ENCODE measurements at regions of chr17 and their contacts with region 1.

Region 1: DNA sequence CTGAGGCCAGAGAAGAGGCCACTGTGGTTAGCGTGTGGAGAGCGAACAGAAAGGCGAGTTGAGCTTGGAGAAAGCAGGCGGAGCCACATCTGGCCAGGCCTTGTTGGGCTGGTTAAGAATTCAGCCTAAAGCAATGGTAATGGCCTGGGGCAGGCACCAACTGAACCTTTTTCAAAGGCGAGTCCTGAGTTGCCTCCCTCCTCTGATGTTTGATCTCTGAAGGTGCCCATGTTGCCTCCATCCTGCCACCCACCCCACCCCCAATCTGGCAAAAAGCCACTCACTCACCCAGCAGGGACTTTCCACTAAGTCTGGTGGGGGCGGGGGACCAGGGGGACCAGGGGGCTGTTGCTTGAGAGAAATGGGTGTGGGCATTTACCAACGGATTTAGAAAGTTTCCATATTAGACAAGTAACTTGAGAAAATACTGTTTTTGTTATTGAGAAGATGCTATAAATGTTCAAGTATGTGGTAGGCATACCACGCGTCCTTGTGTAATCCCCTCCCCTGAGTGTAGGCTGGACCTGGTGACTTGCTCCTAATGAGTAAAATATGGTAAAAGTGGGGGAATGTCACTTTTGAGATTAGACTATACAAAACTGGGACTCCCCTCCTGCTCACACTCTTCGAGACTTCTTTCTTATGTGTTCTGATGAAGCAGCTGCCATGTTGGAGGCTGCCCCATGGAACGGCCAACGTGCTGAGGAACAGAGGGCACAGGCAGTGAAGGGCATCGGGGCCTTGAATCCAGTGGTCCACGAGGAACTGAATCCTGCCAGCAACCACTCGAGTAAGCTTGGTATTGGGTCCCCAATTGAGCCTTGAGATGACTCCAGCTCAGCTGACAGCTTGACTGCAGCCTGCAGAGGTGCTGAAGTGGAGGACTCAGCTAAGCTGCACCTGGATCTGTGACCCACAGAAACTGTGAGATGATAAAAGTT is 29.9 kb upstream of the TNS4 start:
- DNase-seq: no peak
- ATAC-seq: no peak
- H3K4me3 ChIP-seq: no peak overlapping the region
- H3K27ac ChIP-seq: peak overlapping the region in 6 of 10 donors; percentile 71 to 85 (median 74)
- H3K4me1 ChIP-seq: peaks cover 10 to 52% (median 35%) of the 10 kb centered on the region in 9 donors
- H3K27me3 ChIP-seq: peaks cover 0 to 4% (median 0%) of the 10 kb centered on the region in 7 donors
- CTCF ChIP-seq: no peak

Region 2: GRCh38 chr17:40303009-40303657 is 228.2 kb before region 1 on chr17:
- intact Hi-C with region 1: loop called in 6 of 10 experiments (anchors 5 to 10 kb)
- DNase-seq: peak in 1 of 2 donors; percentile 71
- ATAC-seq: peak in 7 of 8 donors; percentile 51 to 72 (median 65)
- H3K4me3 ChIP-seq: no peak overlapping the region
- H3K27ac ChIP-seq: peak overlapping the region in 6 of 10 donors; percentile 14 to 76 (median 22)
- H3K4me1 ChIP-seq: peaks cover 5 to 70% (median 51%) of the 10 kb centered on the region in 9 donors
- H3K27me3 ChIP-seq: no peaks in the 10 kb centered on the region
- CTCF ChIP-seq: peak; percentile 43 to 89 (median 81)

Region 3: DNA sequence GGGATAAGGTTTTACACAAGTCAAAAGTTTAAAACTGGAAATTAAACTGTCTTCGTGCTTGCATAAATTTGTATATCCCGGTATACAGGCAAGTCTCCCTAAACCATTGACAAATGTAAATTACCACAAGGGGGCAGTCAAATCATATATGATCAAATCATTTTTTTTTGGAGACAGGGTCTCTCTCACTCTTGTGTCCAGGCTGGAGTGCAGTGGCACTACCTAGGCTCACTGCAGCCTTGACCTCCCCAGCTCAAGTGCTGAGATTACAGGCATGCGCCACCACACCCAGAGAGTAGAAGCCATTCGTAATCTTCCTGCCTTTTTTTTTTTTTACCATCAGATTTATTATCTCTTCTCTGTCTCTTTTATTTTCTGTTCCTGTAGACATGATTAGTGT is 132.1 kb before region 1 on chr17:
- intact Hi-C with region 1: loop called in 6 of 10 experiments (anchors 1 to 5 kb)
- DNase-seq: no peak
- ATAC-seq: peak in 4 of 8 donors; percentile 13 to 57 (median 38)
- H3K4me3 ChIP-seq: no peak overlapping the region
- H3K27ac ChIP-seq: no peak overlapping the region
- H3K4me1 ChIP-seq: no peaks in the 10 kb centered on the region
- H3K27me3 ChIP-seq: no peaks in the 10 kb centered on the region
- CTCF ChIP-seq: peak; percentile 30 to 78 (median 68)

Region 4: GRCh38 chr17:40443583-40444327 is 87.6 kb before region 1 on chr17:
- intact Hi-C with region 1: loop called (anchors 1 to 5 kb)
- DNase-seq: peak; percentile 77 to 86
- ATAC-seq: peak; percentile 22 to 61 (median 42)
- H3K4me3 ChIP-seq: peak overlapping the region; percentile 66 to 89 (median 82)
- H3K27ac ChIP-seq: peak overlapping the region; percentile 89 to 99 (median 96)
- H3K4me1 ChIP-seq: peaks cover 16 to 61% (median 50%) of the 10 kb centered on the region in 9 donors
- H3K27me3 ChIP-seq: peaks cover 0 to 15% (median 0%) of the 10 kb centered on the region in 7 donors
- CTCF ChIP-seq: peak; percentile 16 to 57 (median 45)

Region 5: DNA sequence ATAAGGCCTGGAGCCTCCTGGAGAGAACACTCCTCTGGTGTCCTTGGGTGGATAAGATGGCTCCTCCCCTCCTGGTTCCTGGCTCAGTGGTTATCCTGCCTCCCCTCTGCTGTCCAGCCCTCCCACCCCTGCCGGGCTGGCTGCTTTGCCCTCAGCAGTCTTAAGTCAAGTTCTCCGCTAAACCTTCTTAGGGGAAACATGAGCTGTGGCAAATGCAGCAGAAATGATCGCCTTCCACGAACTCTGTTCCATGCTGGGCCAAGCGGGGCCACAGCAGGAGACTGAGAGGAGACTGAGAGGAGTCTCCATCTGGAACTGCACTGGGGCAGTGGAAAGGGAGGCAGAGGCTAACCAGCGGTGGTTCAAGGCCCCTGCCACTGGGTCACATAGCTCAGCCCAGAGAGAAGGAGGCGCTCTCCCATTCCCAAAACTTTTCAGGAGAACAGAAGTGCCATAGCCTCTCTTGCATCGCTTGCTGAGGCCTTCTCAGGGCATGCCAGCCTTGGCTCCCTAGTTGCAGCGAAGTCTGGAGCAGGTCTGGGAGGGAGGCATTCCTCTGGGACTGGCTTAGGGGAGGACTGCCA is 56.8 kb before region 1 on chr17:
- intact Hi-C with region 1: loop called in 4 of 10 experiments (anchors 2 to 5 kb)
- DNase-seq: no peak
- ATAC-seq: no peak
- H3K4me3 ChIP-seq: no peak overlapping the region
- H3K27ac ChIP-seq: no peak overlapping the region
- H3K4me1 ChIP-seq: peaks cover 0 to 15% (median 7%) of the 10 kb centered on the region in 9 donors
- H3K27me3 ChIP-seq: peaks cover 0 to 5% (median 0%) of the 10 kb centered on the region in 7 donors
- CTCF ChIP-seq: no peak

Region 6: GRCh38 chr17:40480501-40481003 is 50.8 kb before region 1 on chr17:
- intact Hi-C with region 1: loop called in 5 of 10 experiments (anchors 2 to 5 kb)
- DNase-seq: peak in 1 of 2 donors; percentile 37
- ATAC-seq: peak in 6 of 8 donors; percentile 13 to 54 (median 40)
- H3K4me3 ChIP-seq: no peak overlapping the region
- H3K27ac ChIP-seq: peak overlapping the region in 1 of 10 donors; percentile 82
- H3K4me1 ChIP-seq: peaks cover 0 to 42% (median 6%) of the 10 kb centered on the region in 9 donors
- H3K27me3 ChIP-seq: no peaks in the 10 kb centered on the region
- CTCF ChIP-seq: no peak

Region 7: DNA sequence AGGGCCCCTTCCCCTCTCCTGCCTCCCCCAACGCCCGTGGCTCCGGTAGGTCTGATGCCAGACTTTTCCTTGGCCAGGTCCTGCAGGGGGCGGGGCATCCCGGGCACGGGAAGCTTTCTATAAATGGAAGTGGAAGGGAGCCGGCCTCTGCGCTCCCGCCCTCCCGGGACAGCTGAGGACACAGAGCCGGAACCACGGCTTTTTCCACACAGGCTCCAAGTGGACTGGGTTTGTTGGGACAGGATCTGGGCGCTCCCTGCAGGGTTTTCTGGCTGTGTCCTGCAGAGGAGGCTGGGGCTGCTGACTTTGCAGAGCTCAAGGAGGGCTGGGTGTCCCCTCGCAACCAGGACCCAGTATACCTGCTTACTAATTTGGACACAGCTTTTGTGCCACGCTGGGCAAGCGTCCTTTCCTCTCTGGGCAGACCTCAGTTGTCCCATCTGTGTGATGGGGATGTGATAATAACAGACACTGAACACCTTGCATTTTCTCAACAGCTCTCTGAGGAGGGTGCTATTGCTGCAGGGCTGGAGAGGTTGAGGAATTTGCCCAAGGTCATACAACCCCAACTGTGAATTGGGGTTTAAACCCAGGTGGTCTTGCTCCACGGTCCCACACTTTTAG is 31.7 kb before region 1 on chr17:
- intact Hi-C with region 1: loop called in 1 of 10 experiments (anchors 2 kb)
- DNase-seq: peak; percentile 90
- ATAC-seq: peak; percentile 93 to 98 (median 96)
- H3K4me3 ChIP-seq: peak overlapping the region in 1 of 10 donors; percentile 1
- H3K27ac ChIP-seq: peak overlapping the region in 7 of 10 donors; percentile 31 to 74 (median 64)
- H3K4me1 ChIP-seq: peaks cover 10 to 29% (median 19%) of the 10 kb centered on the region in 9 donors
- H3K27me3 ChIP-seq: peaks cover 0 to 13% (median 0%) of the 10 kb centered on the region in 7 donors
- CTCF ChIP-seq: peak in 4 of 9 donors; percentile 22 to 39 (median 31)